AG04450 (cell line): ENCODE measurements at regions of chr17 and their contacts with region 1.

Region 1: DNA sequence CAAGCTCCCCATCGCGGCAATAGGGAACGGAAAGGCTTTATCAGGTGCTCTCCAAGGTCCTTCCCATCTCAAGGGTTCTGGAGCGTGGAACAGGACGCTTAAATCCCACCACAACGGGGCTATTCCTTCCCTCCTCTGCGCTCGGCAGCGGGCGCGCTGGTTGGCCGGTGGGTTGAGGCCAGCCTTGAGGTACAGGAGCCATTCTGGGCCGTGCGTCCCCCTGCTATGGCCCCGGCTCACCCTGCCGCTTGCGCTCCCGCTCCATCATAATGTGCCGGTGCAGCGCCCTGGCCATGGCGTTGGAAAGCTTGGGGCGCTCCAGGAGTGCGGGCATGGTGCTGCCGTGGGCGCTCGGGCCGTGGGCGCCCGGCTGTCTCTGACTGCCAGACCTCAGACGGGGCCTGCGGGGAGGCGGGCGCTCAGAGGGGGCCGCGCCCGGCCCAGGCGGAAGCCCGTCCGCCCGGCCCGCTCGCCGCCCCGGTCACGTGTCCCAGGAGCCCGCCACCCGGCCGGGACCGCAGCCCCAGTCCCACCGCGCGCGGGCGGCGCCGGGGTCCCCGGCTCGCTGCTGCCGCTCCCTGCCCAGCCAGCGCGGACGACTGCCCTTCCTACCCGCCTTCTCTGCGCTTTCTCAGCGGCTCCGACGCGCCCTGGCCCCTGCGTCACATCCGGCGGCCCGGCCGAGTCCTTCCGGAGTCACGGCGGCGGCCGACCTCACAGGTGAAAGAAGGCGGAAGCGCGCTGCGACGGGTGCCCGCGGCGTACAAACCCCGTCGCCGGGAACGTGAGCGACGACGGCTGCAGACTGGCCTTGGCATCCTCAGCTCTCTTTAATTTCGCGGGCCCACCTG is at the start of gene GPS2:
- DNase-seq: no peak
- H3K4me3 ChIP-seq: peak within 1 kb of the TSS; percentile 86
- H3K27ac ChIP-seq: peak within 1 kb of the TSS; percentile 65
- H3K27me3 ChIP-seq: no peaks in the 10 kb centered on the region
- CTCF ChIP-seq: no peak
- polyA plus RNA-seq, gene GPS2: 21.5 and 22.2 TPM in 2 replicates

Region 2: GRCh38 chr17:7136266-7136877 is 178.6 kb before region 1 on chr17:
- CTCF ChIA-PET with region 1: no interaction called
- POLR2A ChIA-PET with region 1: no interaction called
- DNase-seq: peak; percentile 34
- H3K4me3 ChIP-seq: no peak overlapping the region
- H3K27ac ChIP-seq: no peak overlapping the region
- H3K27me3 ChIP-seq: peaks cover 53% of the 10 kb centered on the region
- CTCF ChIP-seq: peak; percentile 96

Region 3: GRCh38 chr17:7329374-7329996 is 14.5 kb after region 1 on chr17:
- CTCF ChIA-PET with region 1: interaction called, 8 read pairs
- POLR2A ChIA-PET with region 1: interaction called, 17 read pairs
- DNase-seq: peak; percentile 99
- H3K4me3 ChIP-seq: peak overlapping the region; percentile 97
- H3K27ac ChIP-seq: peak overlapping the region; percentile 91
- H3K27me3 ChIP-seq: peaks cover 4% of the 10 kb centered on the region
- CTCF ChIP-seq: no peak

Region 4: GRCh38 chr17:7356072-7356549 is 41.2 kb after region 1 on chr17:
- CTCF ChIA-PET with region 1: no interaction called
- POLR2A ChIA-PET with region 1: no interaction called
- DNase-seq: no peak
- H3K4me3 ChIP-seq: no peak overlapping the region
- H3K27ac ChIP-seq: no peak overlapping the region
- H3K27me3 ChIP-seq: no peaks in the 10 kb centered on the region
- CTCF ChIP-seq: peak; percentile 71